Lower leg skin (tissue), 4 donors: ENCODE measurements at regions of chr13 and their contacts with region 1.

Region 1: GRCh38 chr13:73657821-73658540 is 476.2 kb downstream of the KLF12 start:
- DNase-seq: peak in 1 of 2 donors; percentile 53
- H3K4me3 ChIP-seq: no peak overlapping the region
- CTCF ChIP-seq: no peak
- POLR2A ChIP-seq: no peak

Region 2: GRCh38 chr13:73618275-73618865 is 39.6 kb before region 1 on chr13:
- intact Hi-C with region 1: loop called (anchors 2 kb)
- DNase-seq: no peak
- H3K4me3 ChIP-seq: no peak overlapping the region
- CTCF ChIP-seq: no peak
- POLR2A ChIP-seq: no peak